Panc1 (cell line): ENCODE measurements at regions of chr7 and their contacts with region 1.

Region 1: DNA sequence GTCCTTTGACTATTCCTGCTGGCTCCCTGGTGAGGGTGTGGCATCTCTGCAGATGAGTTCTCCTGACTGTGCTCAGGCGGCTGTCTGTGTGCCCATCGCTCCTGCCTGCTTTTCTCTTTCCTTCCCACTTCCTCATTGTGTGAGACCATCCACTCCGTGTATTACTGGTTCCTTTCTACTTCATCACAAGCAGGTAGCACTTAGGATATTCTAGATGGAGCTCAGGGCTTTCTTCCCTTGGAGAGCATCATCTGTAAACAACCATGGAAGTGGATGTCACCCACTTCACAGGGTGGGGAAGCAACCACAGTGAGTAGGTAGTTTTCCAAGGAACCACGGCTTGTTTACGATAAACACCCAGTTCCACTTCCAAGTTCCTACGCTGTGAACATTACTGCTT is 15.7 kb downstream of the DNAJB6 start:
- DNase-seq: no peak
- ATAC-seq: peak; percentile 22; the same call in 1 of the 2 replicates
- H3K4me3 ChIP-seq: no peak overlapping the region
- H3K27ac ChIP-seq: peak overlapping the region; percentile 45; the same call in 1 of the 2 replicates
- H3K4me1 ChIP-seq: peaks cover 79% of the 10 kb centered on the region
- H3K27me3 ChIP-seq: no peaks in the 10 kb centered on the region
- CTCF ChIP-seq: no peak

Region 2: DNA sequence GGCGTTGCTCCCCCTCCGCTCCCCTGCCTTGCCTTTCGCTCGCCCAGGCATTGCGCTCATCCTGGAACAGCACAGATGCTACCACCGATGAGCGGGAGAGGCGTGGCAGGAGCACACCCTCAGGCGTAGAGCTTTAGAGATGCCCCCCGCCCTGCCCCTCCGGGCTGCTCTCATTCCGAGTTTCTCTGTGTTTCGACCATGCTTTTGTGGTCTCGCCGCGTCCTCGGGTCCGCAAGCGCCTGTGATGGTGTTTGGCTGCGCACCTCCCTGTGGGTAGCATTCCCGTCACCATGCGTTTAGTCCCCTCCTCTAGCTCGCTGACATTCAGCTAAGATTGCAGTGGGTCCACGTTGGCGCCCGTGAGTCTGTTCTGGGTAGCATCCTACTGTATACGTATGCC is 384.3 kb before region 1 on chr7:
- CTCF ChIA-PET with region 1: no interaction called
- POLR2A ChIA-PET with region 1: no interaction called
- in situ Hi-C with region 1: no loop called
- intact Hi-C with region 1: no loop called
- DNase-seq: no peak
- ATAC-seq: no peak
- H3K4me3 ChIP-seq: no peak overlapping the region
- H3K27ac ChIP-seq: no peak overlapping the region
- H3K4me1 ChIP-seq: no peaks in the 10 kb centered on the region
- H3K27me3 ChIP-seq: no peaks in the 10 kb centered on the region
- CTCF ChIP-seq: no peak

Region 3: DNA sequence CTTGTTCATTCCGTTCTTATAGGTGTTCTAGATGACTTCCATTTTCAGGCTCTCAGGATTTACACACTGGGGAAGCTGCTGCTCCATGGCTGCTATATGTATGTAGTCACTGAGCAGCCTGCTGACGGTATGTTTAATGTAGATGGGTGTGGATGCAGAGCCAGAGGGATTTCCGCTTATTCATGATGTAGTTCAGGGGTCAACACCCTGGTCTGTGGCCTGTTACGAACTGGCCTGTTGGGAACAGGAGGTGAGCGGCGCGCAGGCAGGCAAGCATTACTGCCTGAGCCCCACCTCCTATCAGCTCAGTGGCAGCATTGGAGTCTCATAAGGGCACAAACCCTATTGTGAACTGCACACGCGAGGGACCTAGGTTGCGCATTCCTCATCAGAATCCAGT is 18.2 kb after region 1 on chr7:
- CTCF ChIA-PET with region 1: no interaction called
- POLR2A ChIA-PET with region 1: no interaction called
- in situ Hi-C with region 1: no loop called
- intact Hi-C with region 1: loop called (anchors 1 kb)
- DNase-seq: no peak
- ATAC-seq: no peak
- H3K4me3 ChIP-seq: no peak overlapping the region
- H3K27ac ChIP-seq: no peak overlapping the region
- H3K4me1 ChIP-seq: no peaks in the 10 kb centered on the region
- H3K27me3 ChIP-seq: no peaks in the 10 kb centered on the region
- CTCF ChIP-seq: no peak